ENCODE measurements at regions of chr2 and their contacts with region 1.

Region 1: DNA sequence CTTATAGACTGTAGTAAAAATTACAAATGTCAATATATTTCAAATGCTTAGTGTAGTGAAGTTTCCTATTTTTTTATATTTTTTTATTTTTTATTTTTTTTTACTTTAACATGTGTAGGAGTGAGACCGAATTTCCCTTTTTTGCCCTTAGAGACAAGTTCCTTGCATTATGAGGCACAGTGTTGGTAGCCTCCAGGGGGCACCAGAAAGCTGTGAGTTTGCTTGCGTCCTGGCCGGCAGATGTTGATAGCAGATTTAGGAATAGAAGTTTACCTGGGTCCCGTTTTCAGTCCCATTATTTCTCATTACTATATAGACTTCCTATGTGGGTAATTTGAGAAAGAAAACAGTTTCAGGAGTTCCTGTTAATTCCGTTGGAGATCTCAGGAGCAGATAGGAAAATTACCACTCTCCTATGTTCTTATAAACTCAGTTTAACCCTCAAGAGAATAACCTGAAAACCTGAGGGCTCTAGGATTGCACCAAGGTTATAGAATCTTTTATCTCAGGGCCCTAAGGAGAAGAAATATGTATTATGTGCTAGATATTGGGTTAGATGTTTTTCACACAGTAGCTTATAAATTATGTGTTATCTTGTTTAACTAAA is 157.5 kb upstream of the SESTD1 start:
- DNase-seq: peak; percentile 70
- ATAC-seq: peak; percentile 72

Region 2: DNA sequence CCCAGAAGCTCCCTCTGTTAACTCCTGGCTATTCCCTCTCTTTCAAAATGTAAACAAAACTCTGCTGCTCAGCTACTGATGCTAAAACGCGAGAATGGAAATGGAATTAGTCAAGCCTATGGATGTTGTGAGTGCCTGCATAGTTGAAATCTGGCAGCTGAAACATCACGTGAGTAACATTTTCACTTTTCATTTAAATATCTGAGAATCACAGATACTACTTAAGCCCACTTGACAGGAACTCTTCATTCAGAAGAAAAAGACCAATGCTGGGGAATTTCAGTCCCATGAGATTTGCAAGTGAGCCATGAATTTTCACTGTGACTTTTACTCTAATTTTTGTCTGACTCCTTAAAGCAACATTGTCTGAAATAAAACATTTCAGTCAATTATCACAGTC is 57.8 kb after region 1 on chr2:
- intact Hi-C with region 1: no loop called
- DNase-seq: no peak
- ATAC-seq: no peak

Region 3: GRCh38 chr2:179569831-179570233 is 147.7 kb after region 1 on chr2:
- intact Hi-C with region 1: loop called (anchors 10 kb)
- DNase-seq: no peak
- ATAC-seq: peak; percentile 76

Region 4: DNA sequence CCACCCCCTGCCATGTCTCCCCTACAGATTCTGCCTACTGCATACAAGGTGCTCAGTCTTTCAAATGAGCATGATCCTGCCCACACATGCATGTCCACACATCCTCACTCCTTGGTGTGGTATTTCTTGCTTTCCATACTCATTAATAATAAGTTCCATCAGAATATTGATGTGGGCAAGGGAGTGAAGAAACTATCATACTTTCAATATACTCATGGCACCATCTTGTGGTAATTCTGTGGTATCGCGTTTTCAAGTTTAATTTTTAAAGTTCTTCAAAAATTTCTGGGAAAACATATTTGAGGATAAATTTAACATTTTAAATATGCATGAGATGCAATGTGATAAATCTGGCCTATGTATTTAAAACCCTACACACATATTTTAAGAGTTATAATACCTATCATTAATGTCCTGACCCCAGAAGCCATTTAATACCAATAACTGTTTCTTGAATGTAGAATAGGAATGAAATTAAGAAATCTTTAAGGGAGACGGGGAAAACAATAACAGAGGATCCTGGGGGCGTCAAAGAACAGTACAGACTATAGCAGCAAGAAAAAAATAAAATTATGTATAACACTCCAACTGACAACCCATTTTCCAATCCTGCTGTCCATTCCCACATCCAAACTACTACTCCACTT is 329.1 kb after region 1 on chr2:
- intact Hi-C with region 1: loop called (anchors 1 kb)
- DNase-seq: no peak
- ATAC-seq: no peak

Measured in Right ventricle myocardium inferior (tissue), 1 donor.